PC-3 (cell line): ENCODE measurements at regions of chr4 and their contacts with region 1.

Region 1: DNA sequence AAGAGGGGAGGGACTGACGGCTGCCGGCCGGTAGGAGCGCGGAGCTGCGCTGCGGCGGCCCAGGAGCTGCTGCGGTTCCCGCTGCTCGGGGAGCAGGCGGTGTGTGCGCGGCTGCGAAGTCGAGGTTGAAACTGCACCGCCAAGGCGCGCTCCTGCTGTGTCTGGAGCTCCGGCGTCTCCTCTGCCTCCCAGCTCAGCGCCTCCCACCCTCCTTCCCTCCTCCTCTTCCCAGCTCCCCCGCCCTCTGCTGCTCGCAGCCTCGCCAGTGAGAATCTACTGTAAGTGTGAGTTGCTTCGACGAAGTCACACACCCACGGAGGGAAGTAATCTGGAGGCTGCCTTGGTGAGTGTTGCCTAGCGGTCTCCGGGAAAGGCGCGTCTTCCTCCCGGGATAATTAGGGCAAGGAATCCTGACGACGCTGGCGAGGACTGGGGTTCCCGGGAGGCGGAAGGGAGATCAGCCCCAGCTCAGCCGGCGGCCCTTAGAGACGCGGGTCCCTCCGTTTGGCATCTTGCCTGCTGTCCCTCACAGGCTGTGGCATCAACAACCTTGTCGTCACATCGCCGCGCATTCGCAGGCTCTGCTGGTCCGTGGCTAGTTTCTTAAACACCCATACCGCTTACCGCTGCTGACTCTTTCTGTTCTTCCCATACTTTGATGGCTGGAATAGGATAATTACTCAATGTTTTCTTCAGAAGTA is at the start of gene EPHA5:
- DNase-seq: peak; percentile 78
- ATAC-seq: peak; percentile 80
- H3K4me3 ChIP-seq: peak within 1 kb of the TSS; percentile 70
- H3K27ac ChIP-seq: 0 out of 2 replicates have a peak within 1 kb of the TSS, but pooled peaks have one; percentile 4
- H3K4me1 ChIP-seq: peaks cover 44% of the 10 kb centered on the region
- H3K27me3 ChIP-seq: peaks cover 21% of the 10 kb centered on the region
- CTCF ChIP-seq: no peak
- total RNA-seq, gene EPHA5: 2.0 and 2.2 TPM in 2 replicates

Region 2: DNA sequence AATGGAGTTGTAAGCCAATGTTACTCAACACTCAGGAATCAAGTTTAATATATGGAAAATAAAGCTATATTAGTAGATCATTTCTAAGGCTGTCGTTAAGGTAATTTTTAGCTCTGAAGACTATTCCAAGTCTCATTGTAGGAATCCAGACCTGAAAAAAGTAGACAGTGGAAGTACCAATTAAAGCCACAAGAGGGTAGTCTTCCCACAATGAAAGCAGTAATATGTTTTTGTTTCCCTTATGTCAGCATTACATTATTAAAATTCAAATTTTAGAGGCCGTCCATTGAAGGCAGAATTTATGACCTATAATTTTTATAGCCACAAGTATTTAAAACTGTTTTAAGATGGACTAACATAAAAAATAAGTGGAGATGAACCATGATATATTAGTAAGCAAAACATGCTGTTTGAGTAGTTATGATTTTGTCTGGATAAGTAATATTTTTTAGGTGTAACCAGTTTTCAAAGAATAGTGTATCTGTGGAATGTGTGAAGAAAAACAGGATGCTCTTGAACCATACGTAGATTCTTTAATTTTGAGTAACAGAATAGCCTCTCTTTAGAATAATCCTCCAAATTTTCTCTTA is 888.6 kb before region 1 on chr4:
- CTCF ChIA-PET with region 1: no interaction called
- POLR2A ChIA-PET with region 1: no interaction called
- intact Hi-C with region 1: loop called (anchors 5 kb)
- DNase-seq: peak; percentile 80
- ATAC-seq: peak; percentile 59
- H3K4me3 ChIP-seq: no peak overlapping the region
- H3K27ac ChIP-seq: no peak overlapping the region
- H3K4me1 ChIP-seq: peaks cover 9% of the 10 kb centered on the region
- H3K27me3 ChIP-seq: no peaks in the 10 kb centered on the region
- CTCF ChIP-seq: peak; percentile 94

Region 3: GRCh38 chr4:65502131-65502701 is 168.3 kb before region 1 on chr4:
- CTCF ChIA-PET with region 1: no interaction called
- POLR2A ChIA-PET with region 1: no interaction called
- intact Hi-C with region 1: loop called (anchors 2 kb)
- DNase-seq: peak; percentile 97
- ATAC-seq: peak; percentile 85
- H3K4me3 ChIP-seq: peak overlapping the region; percentile 50
- H3K27ac ChIP-seq: peak overlapping the region; percentile 66
- H3K4me1 ChIP-seq: peaks cover 50% of the 10 kb centered on the region
- H3K27me3 ChIP-seq: no peaks in the 10 kb centered on the region
- CTCF ChIP-seq: no peak

Region 4: DNA sequence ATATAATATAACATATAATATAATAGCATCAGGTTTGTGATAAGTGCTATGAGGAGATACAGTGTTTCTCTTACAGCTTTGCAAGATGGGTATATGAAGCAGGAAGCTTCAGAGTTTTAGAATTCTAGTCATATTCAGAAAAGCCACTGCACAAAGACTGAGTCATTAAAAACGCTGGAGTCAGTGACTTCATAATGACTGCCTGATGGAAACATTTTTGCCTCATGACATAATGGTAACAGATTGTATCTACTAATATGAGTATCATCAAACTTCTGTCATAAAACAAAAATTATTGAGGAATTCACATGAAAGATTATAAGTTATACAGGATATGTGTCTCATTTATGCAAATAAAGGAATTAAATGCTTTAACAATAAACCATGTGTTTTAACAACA is 47.0 kb before region 1 on chr4:
- CTCF ChIA-PET with region 1: no interaction called
- POLR2A ChIA-PET with region 1: interaction called, 4 read pairs
- intact Hi-C with region 1: loop called (anchors 5 kb)
- DNase-seq: peak; percentile 83
- ATAC-seq: peak; percentile 80
- H3K4me3 ChIP-seq: no peak overlapping the region
- H3K27ac ChIP-seq: peak overlapping the region; percentile 40
- H3K4me1 ChIP-seq: peaks cover 14% of the 10 kb centered on the region
- H3K27me3 ChIP-seq: no peaks in the 10 kb centered on the region
- CTCF ChIP-seq: no peak

Region 5: GRCh38 chr4:65865489-65865888 is 195.0 kb after region 1 on chr4:
- CTCF ChIA-PET with region 1: no interaction called
- POLR2A ChIA-PET with region 1: no interaction called
- intact Hi-C with region 1: loop called (anchors 2 kb)
- DNase-seq: peak; percentile 77
- ATAC-seq: no peak
- H3K4me3 ChIP-seq: no peak overlapping the region
- H3K27ac ChIP-seq: no peak overlapping the region
- H3K4me1 ChIP-seq: peaks cover 17% of the 10 kb centered on the region
- H3K27me3 ChIP-seq: no peaks in the 10 kb centered on the region
- CTCF ChIP-seq: peak; percentile 89

Region 6: DNA sequence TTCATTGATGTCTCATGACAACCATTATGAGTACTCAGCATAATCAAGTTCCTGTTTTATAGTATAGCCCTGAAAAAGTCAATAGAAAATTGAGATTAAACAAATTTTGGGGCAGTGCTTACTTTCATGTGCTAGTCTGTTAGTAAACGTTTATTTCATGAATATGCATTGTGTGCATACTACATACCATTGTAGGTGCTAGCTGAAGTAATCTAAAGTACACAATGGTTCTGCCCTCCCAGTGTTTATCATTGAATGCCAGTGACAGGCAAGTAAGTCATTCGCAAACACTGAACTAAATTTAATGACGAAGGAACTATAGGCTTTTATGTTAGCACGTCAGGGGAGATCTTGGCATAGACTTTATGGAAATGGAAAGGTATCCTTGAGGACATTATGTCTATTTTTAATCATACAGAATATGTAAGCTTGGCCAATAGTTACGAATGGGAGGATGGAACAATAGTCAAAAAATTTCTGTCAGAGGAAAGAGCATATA is 426.7 kb after region 1 on chr4:
- CTCF ChIA-PET with region 1: no interaction called
- POLR2A ChIA-PET with region 1: no interaction called
- intact Hi-C with region 1: loop called (anchors 5 kb)
- DNase-seq: peak; percentile 93
- ATAC-seq: peak; percentile 83
- H3K4me3 ChIP-seq: no peak overlapping the region
- H3K27ac ChIP-seq: peak overlapping the region; percentile 94
- H3K4me1 ChIP-seq: peaks cover 46% of the 10 kb centered on the region
- H3K27me3 ChIP-seq: no peaks in the 10 kb centered on the region
- CTCF ChIP-seq: no peak

Region 7: GRCh38 chr4:67327262-67328017 is 1657.0 kb after region 1 on chr4:
- CTCF ChIA-PET with region 1: no interaction called
- POLR2A ChIA-PET with region 1: no interaction called
- intact Hi-C with region 1: loop called (anchors 10 kb)
- DNase-seq: peak; percentile 90
- ATAC-seq: peak; percentile 94
- H3K4me3 ChIP-seq: no peak overlapping the region
- H3K27ac ChIP-seq: no peak overlapping the region
- H3K4me1 ChIP-seq: no peaks in the 10 kb centered on the region
- H3K27me3 ChIP-seq: no peaks in the 10 kb centered on the region
- CTCF ChIP-seq: peak; percentile 98